Calu3 (cell line): ENCODE measurements at regions of chr11 and their contacts with region 1.

Region 1: DNA sequence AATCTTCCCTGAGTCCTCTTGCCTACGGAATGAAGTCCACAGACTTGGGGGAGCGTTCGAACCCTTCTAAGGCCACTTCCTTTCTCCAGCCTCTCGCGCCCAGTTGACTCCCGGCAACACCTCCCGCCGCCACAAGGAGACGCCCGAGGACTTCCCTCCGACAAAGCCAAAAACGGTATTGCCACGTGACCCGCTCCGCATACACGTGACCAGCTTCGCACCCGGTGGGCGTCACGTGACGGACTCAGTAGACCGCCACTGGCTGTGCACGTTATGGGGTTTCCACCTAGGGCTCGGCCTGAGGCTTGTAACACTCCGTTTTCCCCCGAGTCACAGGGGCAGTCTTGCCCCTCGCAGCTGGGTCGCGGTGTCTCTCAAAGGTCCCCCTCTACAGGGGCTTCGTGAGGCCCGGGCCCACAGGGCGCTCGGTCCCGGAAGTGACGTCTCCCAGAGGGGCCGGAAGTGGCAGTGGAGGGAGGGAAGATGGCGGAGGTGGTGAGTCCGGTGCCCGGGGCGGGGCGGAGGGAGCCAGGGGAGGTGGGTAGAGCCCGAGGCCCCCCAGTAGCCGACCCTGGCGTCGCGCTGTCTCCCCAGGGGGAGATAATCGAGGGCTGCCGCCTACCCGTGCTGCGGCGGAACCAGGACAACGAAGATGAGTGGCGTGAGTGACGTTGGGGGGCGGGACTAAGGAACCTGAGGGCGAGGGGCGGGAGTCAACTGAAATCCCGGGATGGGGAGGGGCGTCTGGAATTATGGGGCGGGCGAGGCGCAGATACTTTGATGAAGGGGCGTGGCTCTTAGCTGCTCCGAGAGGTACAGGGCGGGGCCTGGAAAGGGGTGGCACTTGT is at the start of gene KAT5:
- DNase-seq: peak; percentile 98
- H3K4me3 Mint-ChIP-seq: peak within 1 kb of the TSS; percentile 86
- H3K27ac Mint-ChIP-seq: peak within 1 kb of the TSS; percentile 99
- H3K4me1 Mint-ChIP-seq: peaks cover 6% of the 10 kb centered on the region
- H3K27me3 Mint-ChIP-seq: no peaks in the 10 kb centered on the region
- CTCF ChIP-seq: peak; percentile 95
- total RNA-seq, gene KAT5: 50.9 and 51.0 TPM in 2 replicates

Region 2: DNA sequence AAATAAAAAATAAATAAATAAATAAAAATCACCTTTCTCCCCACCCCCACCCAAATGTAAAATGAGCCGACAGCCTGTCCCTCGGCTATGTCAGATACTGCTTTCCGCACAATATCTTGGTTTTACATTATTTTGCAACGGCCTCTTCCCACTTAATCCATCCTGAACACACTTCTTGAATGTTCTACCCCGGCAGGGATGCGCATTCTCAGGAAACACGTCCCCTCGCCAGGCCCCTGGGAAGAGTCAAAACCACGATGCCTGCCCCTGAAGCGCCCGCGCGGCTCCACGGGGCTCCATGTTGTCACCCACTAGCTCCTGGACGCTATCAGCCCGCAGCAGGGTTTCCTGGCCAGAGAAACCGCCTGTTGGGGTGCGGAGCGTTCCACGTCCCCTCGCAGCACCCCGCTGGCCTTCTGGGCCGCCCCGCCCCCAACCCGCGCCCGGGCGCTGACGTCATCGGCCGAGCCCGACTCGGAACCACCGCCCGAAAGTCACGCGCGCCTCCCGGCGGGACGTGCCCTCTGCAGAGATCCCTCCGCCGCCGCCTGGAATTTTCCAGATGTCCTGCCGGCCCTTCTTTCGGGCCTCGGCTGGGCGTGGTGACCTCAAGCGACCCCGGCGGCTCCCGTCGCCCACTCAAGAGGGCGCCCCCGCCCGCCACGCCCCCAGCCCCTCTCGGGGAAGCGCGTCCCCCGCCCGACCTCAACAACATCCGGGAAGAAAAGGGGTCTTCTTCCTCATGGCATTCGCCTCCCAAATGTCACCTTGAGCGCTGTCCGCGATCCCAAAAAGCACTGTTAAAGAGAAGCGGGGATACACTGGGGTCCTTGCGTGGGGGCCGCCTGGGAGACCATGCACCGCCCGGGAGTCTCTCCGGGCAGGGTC is 290.0 kb before region 1 on chr11:
- CTCF ChIA-PET with region 1: no interaction called
- intact Hi-C with region 1: no loop called
- DNase-seq: peak; percentile 97
- H3K4me3 Mint-ChIP-seq: peak overlapping the region; percentile 90
- H3K27ac Mint-ChIP-seq: peak overlapping the region; percentile 99
- H3K4me1 Mint-ChIP-seq: peaks cover 55% of the 10 kb centered on the region
- H3K27me3 Mint-ChIP-seq: peaks cover 16% of the 10 kb centered on the region
- CTCF ChIP-seq: no peak

Region 3: DNA sequence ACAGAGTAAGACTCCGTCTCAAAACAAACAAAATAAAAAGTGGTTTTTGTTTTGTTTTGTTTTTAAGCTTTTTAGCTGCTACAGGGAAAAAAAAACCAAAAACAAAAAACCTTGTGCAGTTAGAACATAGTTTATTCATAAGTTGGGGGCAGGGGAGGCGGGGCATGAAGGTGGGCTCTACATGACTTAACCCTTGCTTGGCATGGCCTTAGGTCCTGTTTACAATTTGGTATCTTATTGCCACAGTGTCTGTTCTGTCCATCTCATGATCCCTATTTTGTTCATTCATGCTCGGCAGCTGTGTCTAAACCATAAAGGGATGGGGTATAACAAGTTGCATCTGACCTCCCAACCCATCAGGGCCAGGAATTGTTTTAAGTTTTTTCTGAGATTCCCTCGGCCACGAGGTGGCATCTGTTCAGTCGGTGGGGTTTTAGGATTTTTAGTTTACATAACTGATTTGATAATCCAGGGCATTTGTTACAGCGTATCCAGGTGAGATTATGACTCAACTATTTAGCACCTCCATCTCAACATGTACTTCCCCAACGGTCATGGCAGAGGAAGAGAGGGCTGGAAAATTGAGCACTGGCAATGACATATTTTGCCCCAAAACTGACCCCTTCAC is 61.9 kb after region 1 on chr11:
- CTCF ChIA-PET with region 1: interaction called, 6 read pairs
- intact Hi-C with region 1: loop called (anchors 5 kb)
- DNase-seq: no peak
- H3K4me3 Mint-ChIP-seq: no peak overlapping the region
- H3K27ac Mint-ChIP-seq: no peak overlapping the region
- H3K4me1 Mint-ChIP-seq: no peaks in the 10 kb centered on the region
- H3K27me3 Mint-ChIP-seq: no peaks in the 10 kb centered on the region
- CTCF ChIP-seq: no peak

Region 4: DNA sequence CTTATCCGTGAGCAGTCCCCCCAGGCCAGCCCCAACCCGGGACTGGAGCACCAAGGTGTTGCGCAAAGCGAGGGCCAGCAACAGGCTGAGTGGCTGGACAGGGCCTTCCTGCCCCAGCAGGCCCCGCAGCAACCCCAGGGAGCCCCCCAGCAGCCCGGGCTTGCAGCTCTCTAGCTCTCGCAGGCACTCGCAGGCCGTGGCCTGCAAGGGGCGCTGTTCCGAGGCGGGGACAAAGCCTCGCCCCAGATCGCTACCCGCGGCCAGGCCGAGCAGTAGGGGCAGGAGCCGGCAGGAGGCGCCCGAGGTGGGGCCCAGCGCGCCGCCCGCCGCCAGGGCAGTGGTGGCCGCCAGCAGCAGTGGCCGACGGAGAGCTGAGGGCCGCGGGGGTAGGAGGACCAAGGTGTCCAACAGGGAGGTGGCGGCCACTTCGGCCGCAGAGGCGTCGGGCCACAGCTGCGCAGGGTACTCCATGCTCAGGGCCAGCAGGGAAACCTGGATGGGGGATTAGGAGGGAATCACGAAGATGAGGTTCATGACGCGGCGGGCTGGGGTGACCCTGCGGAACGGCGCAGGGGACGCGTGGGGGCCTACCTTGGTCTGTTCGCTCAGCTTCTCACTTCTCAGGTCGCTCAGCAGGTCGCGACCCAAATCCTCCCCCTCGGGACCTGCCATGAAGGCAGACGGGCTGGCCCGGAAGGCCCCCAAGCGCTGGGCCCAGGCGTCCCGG is 68.0 kb after region 1 on chr11:
- CTCF ChIA-PET with region 1: interaction called, 22 read pairs
- intact Hi-C with region 1: no loop called
- DNase-seq: peak; percentile 93
- H3K4me3 Mint-ChIP-seq: peak overlapping the region; percentile 98
- H3K27ac Mint-ChIP-seq: peak overlapping the region; percentile 96
- H3K4me1 Mint-ChIP-seq: peaks cover 16% of the 10 kb centered on the region
- H3K27me3 Mint-ChIP-seq: no peaks in the 10 kb centered on the region
- CTCF ChIP-seq: peak; percentile 94

Region 5: DNA sequence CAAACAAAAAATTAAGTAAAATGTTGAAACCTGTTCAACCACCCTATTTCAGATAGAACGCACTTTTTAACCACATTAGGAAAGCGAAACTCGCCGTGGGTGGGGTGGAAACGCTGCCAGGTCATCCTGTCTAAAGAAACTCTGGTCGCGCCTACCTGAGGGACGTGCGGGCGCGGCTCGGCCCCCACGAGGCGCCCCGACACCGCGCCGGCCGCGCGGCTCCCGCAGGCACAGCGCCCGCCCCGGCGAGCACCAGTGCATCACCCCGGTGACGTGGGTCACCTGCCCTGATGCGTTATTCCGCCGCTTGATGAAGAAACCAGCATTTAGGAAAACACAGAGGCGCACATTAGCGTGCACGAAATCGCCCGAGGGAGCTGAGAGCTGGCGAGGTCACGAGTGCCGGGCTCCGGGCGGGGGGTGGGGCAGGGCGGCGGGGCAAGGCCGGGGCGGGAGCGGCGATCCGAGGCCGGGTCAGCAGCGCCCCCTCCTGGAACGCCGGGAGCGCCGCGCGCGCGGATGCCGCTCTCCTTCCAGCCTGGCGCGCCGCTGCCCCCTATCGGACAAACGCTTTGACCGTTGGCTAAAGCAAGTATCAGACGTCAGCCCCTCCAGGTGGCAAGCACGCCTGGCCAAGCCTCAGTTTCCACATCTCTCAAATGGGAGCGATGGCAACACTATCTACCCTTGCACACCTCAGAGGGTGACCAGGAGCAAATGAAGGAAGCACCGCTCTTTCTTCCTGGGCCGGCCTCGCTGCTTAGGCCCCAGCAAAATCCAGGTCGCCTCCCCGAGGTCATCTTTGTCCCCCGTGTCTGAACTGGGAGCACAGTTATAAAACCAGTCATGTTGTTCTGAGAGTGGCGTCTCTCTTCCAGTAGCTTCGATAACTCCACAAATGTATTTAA is 106.1 kb after region 1 on chr11:
- CTCF ChIA-PET with region 1: interaction called, 15 read pairs
- intact Hi-C with region 1: loop called (anchors 2 kb)
- DNase-seq: peak; percentile 97
- H3K4me3 Mint-ChIP-seq: peak overlapping the region; percentile 66
- H3K27ac Mint-ChIP-seq: no peak overlapping the region
- H3K4me1 Mint-ChIP-seq: no peaks in the 10 kb centered on the region
- H3K27me3 Mint-ChIP-seq: no peaks in the 10 kb centered on the region
- CTCF ChIP-seq: peak; percentile 100

Region 6: GRCh38 chr11:65988791-65989592 is 277.0 kb after region 1 on chr11:
- CTCF ChIA-PET with region 1: no interaction called
- intact Hi-C with region 1: loop called (anchors 1 kb)
- DNase-seq: peak; percentile 90
- H3K4me3 Mint-ChIP-seq: no peak overlapping the region
- H3K27ac Mint-ChIP-seq: no peak overlapping the region
- H3K4me1 Mint-ChIP-seq: no peaks in the 10 kb centered on the region
- H3K27me3 Mint-ChIP-seq: no peaks in the 10 kb centered on the region
- CTCF ChIP-seq: peak; percentile 84